ENCODE measurements at regions of chr13 and their contacts with region 1.

Region 1: DNA sequence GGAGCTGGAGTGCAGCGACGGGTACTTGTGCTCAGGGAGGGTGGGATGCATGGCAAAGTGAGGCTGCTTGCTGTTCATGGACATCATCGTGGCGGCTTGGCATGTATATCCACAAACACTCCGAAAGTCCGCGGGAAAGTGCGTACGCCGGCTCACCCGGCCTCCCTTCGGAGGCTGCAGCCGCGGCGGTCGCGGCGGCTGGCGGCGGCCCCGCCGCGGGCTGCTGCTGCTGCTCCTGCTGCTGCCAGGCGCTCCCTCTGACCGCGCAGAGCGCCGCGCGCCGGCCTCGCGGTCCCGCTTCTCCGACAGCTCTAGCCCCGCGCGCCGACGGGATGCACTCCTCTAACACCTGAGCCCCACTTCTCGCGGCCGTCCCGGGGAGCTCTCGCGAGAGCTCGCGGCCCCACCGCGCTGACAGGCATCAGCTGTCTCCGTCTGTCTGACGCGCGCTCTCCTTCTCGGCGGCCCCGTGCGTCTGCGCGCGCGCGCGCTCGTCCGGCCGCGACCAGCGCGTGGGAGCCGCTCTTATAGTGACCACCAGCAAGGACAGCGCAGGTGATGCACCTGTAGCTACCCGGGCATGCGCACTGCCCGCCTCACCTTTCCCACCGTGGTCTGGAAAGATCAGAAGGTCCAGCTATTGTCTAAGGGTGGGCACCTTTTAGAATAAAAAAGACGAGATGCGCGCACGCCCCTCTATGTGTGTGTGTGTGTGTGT is at the start of gene POU4F1:
- DNase-seq: peak; percentile 91
- H3K4me3 Mint-ChIP-seq: peak within 1 kb of the TSS; percentile 80
- H3K27ac Mint-ChIP-seq: peak within 1 kb of the TSS; percentile 76
- H3K4me1 Mint-ChIP-seq: peaks cover 31% of the 10 kb centered on the region
- H3K27me3 Mint-ChIP-seq: peaks cover 88% of the 10 kb centered on the region
- total RNA-seq, gene POU4F1: 0.12 and 0.14 TPM in 2 replicates

Region 2: DNA sequence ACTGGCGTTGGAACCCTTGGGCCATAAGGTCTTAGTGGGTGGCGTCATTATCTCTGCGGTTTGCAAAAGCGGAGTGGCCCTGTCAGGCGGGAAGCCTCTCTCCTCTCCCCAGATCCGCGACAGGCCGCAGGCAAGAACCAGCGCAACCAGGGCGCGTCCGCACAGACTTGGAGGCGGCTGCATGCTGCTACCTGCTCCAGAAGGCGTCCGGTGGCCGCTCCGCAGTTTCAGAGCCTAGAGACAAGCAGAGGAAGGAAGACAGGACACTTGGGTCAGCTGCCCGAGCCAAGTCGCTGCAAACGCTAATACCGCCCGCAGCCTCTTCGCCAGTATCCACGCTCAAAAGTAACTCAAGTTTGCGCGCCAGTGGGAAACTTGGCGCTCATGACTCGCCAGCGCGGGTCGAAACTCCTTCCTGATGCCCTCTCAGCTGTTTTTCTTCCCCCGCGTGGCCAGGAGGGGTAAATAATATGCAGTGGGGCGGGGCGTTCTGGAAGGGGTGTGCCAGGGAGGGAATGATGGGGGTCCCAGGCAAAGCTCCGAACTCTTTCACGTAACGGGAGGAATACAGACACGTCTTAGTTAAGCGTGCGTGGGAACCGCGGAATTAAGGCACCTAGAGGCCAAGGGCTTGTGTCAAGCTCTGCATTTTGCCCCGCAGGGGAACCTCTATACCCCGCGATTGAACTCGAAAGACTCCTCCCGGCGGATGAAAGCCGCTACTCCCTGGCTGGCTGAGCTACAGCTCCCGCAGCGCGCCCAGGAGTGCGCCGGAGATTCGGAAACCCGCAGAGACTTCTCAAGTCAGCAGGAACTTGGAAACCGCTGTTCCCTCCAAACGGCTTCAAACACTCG is 684.8 kb before region 1 on chr13 and contains the start of gene EDNRB:
- intact Hi-C with region 1: loop called (anchors 5 kb)
- DNase-seq: peak; percentile 61
- H3K4me3 Mint-ChIP-seq: no peak within 1 kb of the TSS
- H3K27ac Mint-ChIP-seq: no peak within 1 kb of the TSS
- H3K4me1 Mint-ChIP-seq: no peaks in the 10 kb centered on the region
- H3K27me3 Mint-ChIP-seq: peaks cover 34% of the 10 kb centered on the region
- total RNA-seq, gene EDNRB: not detected in 2 replicates